B cell (primary cell): ENCODE measurements at regions of chr3 and their contacts with region 1.

Region 1: DNA sequence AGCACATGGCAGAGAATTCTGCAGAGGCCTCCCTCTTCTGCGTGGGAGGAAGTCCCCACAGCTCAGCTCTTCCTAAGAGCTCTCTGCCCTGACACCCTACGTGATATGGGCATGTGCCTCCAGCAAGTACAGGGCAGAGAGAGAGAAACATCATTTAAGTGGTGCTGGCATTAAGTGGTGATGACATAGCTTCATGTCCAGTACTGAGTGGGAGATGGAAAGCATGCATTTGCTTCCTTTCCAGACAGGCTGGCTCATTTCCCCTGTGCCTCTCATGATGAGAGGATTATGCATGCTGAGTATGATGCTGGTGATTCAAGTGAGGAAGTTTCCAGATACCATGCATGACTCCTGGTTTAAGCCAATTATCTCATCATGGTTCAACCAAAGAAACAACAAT is 26.9 kb downstream of the BFSP2 start:
- DNase-seq: no peak
- ATAC-seq: no peak
- H3K4me3 ChIP-seq: no peak overlapping the region
- H3K4me3 Mint-ChIP-seq: no peak overlapping the region
- H3K27ac ChIP-seq: no peak overlapping the region
- H3K27ac Mint-ChIP-seq: no peak overlapping the region
- H3K4me1 ChIP-seq: peaks cover 0 to 16% of the 10 kb centered on the region in 2 donors
- H3K4me1 Mint-ChIP-seq: peaks cover 13% of the 10 kb centered on the region
- H3K27me3 ChIP-seq: peaks cover 0 to 8% (median 2%) of the 10 kb centered on the region in 4 experiments
- H3K27me3 Mint-ChIP-seq: peaks cover 3% of the 10 kb centered on the region
- CTCF ChIP-seq: no peak

Region 2: DNA sequence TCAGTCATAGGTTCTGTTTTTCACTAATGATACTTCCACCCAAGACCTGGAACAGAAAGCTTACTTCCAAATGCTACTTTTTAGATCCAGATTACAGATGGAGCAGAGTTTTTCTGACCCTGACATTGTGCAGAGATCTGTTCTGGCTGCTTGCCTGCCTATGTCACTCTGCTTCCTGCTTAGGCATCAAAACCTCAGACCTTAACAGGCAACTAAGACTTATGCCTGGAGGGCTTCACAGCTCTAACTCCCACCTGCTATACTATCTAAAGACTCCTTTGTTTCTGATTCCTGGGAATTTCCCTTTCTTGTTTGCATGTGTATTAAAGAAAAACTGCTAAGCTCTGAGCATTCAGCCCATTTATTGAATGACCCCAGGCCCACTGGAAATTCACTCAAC is 547.1 kb before region 1 on chr3:
- CTCF ChIA-PET with region 1: no interaction called
- POLR2A ChIA-PET with region 1: no interaction called
- intact Hi-C with region 1: no loop called
- DNase-seq: no peak
- ATAC-seq: no peak
- H3K4me3 ChIP-seq: no peak overlapping the region
- H3K4me3 Mint-ChIP-seq: no peak overlapping the region
- H3K27ac ChIP-seq: no peak overlapping the region
- H3K27ac Mint-ChIP-seq: no peak overlapping the region
- H3K4me1 ChIP-seq: no peaks in the 10 kb centered on the region
- H3K4me1 Mint-ChIP-seq: no peaks in the 10 kb centered on the region
- H3K27me3 ChIP-seq: no peaks in the 10 kb centered on the region
- H3K27me3 Mint-ChIP-seq: peaks cover 5% of the 10 kb centered on the region
- CTCF ChIP-seq: no peak

Region 3: DNA sequence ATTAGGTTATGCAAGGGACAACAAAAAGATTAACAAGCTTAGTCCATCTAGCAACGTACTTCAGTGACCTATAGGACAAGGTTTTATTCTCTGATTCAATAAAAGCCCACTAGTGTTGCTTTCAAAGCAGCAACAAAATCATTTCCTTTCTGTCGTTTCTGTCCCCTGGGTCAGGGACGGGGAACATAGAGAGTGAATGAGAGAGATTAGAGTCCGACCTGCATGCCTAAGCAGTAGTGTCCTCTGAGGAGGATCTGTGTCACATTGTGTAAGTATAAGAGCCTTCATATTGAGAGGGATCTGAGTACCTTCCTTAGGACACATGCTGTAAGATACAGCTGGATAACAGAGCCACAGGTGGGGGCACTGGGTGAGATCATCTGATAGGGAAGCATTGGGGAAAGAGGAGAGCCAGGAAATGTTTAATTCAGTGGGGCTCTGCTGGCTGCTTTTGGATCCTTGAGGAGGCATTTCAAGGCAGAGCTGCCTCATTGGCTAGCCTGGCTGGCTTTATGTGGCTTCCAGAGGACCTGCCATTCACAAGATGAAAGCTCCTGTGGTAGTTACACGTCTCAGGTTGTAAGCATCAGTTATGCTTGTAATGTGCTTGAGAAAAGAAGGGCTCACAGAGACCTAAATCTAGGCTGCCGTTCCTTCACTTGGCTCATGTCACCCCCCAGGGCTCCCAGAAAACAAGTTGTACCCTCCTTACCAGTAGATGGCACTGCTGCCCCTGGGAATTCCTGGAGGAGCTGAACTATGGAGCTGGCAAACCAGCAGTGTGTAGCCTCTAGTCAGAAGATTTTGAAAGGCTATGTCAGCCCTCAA is 385.8 kb before region 1 on chr3:
- CTCF ChIA-PET with region 1: no interaction called
- POLR2A ChIA-PET with region 1: no interaction called
- intact Hi-C with region 1: loop called (anchors 2 kb)
- DNase-seq: peak; percentile 15
- ATAC-seq: no peak
- H3K4me3 ChIP-seq: no peak overlapping the region
- H3K4me3 Mint-ChIP-seq: no peak overlapping the region
- H3K27ac ChIP-seq: no peak overlapping the region
- H3K27ac Mint-ChIP-seq: no peak overlapping the region
- H3K4me1 ChIP-seq: peaks cover 8 to 17% of the 10 kb centered on the region in 2 donors
- H3K4me1 Mint-ChIP-seq: peaks cover 6% of the 10 kb centered on the region
- H3K27me3 ChIP-seq: peaks cover 0 to 39% (median 30%) of the 10 kb centered on the region in 4 experiments
- H3K27me3 Mint-ChIP-seq: peaks cover 39% of the 10 kb centered on the region
- CTCF ChIP-seq: no peak

Region 4: DNA sequence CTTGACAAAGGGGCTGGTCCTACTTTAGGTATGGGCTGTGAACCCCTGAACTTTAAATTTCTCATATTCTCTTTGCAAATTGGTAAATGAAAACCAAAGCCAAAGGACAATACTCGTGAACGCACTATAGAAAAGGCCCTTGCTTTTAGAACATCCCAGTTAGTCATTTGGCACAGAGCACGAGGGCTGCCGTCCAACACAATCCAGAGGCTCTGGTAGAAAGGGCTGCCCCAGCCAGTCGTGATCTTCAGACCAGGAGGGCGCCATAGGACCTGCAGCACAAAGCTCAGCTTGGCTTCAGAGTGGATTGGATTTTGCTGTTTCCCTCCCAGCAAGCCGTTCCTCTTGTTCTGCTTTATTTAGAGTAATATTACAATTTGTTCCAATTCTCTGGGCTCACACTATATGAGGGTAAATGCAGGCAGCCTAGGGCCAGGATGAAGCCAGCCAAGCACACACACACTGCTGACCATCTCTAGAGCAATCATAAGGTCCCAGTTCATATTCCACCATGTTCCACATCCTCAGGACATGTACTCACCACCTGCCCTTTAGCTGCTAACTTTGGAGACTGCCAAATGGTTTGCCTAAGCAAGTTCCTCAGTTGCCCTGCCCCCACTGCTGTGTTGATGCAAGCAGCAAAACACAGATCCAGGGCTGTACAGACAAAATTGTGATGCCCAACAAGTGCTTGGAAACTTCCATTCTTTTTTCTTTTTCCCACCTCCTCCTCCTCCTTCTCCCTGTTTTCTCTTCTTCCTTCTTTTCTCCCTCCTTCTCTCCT is 32.8 kb before region 1 on chr3:
- CTCF ChIA-PET with region 1: no interaction called
- POLR2A ChIA-PET with region 1: no interaction called
- intact Hi-C with region 1: no loop called
- DNase-seq: no peak
- ATAC-seq: no peak
- H3K4me3 ChIP-seq: no peak overlapping the region
- H3K4me3 Mint-ChIP-seq: no peak overlapping the region
- H3K27ac ChIP-seq: no peak overlapping the region
- H3K27ac Mint-ChIP-seq: no peak overlapping the region
- H3K4me1 ChIP-seq: peaks cover 0 to 7% of the 10 kb centered on the region in 2 donors
- H3K4me1 Mint-ChIP-seq: peaks cover 3% of the 10 kb centered on the region
- H3K27me3 ChIP-seq: peaks cover 0 to 3% (median 0%) of the 10 kb centered on the region in 4 experiments
- H3K27me3 Mint-ChIP-seq: peaks cover 7% of the 10 kb centered on the region
- CTCF ChIP-seq: no peak

Region 5: GRCh38 chr3:133812872-133813271 is 386.2 kb after region 1 on chr3:
- CTCF ChIA-PET with region 1: no interaction called
- POLR2A ChIA-PET with region 1: no interaction called
- intact Hi-C with region 1: loop called (anchors 10 kb)
- DNase-seq: no peak
- ATAC-seq: no peak
- H3K4me3 ChIP-seq: no peak overlapping the region
- H3K4me3 Mint-ChIP-seq: no peak overlapping the region
- H3K27ac ChIP-seq: no peak overlapping the region
- H3K27ac Mint-ChIP-seq: no peak overlapping the region
- H3K4me1 ChIP-seq: no peaks in the 10 kb centered on the region
- H3K4me1 Mint-ChIP-seq: no peaks in the 10 kb centered on the region
- H3K27me3 ChIP-seq: no peaks in the 10 kb centered on the region
- H3K27me3 Mint-ChIP-seq: no peaks in the 10 kb centered on the region
- CTCF ChIP-seq: no peak